ENCODE measurements at regions of chr19 and their contacts with region 1.

Region 1: DNA sequence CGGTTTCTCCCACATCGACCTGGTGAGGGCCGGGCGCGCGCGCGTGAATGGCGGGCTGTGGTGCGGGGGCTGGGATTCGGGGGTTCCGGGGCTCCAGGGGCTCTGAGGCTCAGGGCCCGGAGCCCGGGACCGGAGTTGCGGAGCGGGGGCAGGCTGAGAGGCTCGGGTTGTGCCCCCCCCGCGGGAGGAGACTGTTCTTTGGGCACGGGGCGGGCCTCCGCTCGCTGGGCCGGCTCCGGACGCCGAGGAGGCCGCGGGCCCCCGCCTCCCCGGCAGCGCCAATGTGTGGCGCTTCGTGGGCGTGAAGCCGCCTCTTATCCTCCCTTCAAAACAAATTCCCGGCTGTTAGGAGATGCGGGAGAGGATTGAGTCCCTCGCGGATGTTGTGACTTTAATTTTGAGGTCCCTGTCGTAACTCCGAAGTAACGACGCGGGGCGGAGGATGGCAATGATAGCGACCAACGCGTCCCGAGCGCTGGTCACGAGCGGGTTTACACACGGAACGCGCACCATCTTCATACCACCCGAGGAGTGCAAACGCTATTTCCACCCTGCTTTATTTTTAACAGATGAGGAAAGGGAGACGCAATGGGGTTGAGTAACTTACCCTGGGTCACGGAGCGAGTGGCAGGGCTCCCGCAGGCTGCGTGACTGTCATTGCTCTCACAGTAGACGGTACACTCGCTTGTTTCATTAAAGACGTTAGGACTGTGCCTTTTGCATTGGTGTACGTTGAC is 536 bp downstream of the UBA2 start:
- DNase-seq: peak in 5 of 9 experiments; percentile 24 to 61 (median 35)
- ATAC-seq: peak; percentile 43
- H3K4me3 ChIP-seq: peak overlapping the region; percentile 58 to 84
- H3K4me3 Mint-ChIP-seq: peak overlapping the region; percentile 99
- H3K27ac ChIP-seq: peak overlapping the region; percentile 76 to 82
- H3K27ac Mint-ChIP-seq: peak overlapping the region; percentile 96
- H3K4me1 ChIP-seq: peaks cover 29% of the 10 kb centered on the region
- H3K4me1 Mint-ChIP-seq: peaks cover 41% of the 10 kb centered on the region
- H3K27me3 ChIP-seq: no peaks in the 10 kb centered on the region
- H3K27me3 Mint-ChIP-seq: no peaks in the 10 kb centered on the region
- CTCF ChIP-seq: no peak

Region 2: DNA sequence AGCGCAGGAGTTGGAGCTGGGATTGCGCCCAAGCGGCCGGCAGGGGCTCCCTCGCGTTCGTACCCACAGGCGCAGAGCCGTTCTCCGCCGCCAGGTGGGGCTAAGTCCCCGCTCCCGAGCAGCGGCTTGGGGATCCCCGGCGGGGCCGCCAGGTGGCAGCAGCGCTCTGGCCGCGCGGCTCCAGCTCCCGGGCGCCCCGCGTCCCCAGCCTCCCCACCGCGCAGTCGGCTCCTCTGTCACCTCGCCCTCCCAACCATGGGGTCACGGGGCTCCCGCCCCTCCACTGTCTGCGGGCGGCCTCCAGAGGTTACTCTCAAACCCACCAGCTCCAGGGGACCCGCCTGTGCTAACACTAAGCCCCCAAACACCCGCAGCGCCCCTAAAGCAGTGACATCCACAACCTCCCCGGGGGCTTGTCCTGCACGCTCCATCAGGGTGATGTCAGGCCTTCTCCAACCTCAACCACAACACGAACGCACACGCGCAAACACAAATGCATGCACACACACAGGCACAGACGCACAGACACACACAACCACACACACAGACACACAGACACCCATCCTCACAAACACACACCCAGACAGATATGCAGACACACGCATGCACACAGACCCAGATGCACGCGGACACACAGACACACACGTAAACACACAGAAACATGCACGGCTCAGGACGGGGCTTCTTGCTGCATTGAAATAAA is 650.5 kb before region 1 on chr19:
- CTCF ChIA-PET with region 1: interaction called, 3 read pairs
- POLR2A ChIA-PET with region 1: no interaction called
- intact Hi-C with region 1: loop called in 1 of 2 experiments (anchors 5 kb)
- DNase-seq: peak; percentile 68 to 89 (median 82)
- ATAC-seq: peak; percentile 98
- H3K4me3 ChIP-seq: no peak overlapping the region
- H3K4me3 Mint-ChIP-seq: peak overlapping the region; percentile 2
- H3K27ac ChIP-seq: no peak overlapping the region
- H3K27ac Mint-ChIP-seq: no peak overlapping the region
- H3K4me1 ChIP-seq: peaks cover 11% of the 10 kb centered on the region
- H3K4me1 Mint-ChIP-seq: peaks cover 8% of the 10 kb centered on the region
- H3K27me3 ChIP-seq: peaks cover 0 to 7% of the 10 kb centered on the region in 2 experiments
- H3K27me3 Mint-ChIP-seq: peaks cover 35% of the 10 kb centered on the region
- CTCF ChIP-seq: peak; percentile 100

Region 3: GRCh38 chr19:34288381-34288780 is 140.3 kb before region 1 on chr19:
- CTCF ChIA-PET with region 1: no interaction called
- POLR2A ChIA-PET with region 1: no interaction called
- intact Hi-C with region 1: no loop called
- DNase-seq: no peak
- ATAC-seq: no peak
- H3K4me3 ChIP-seq: no peak overlapping the region
- H3K4me3 Mint-ChIP-seq: no peak overlapping the region
- H3K27ac ChIP-seq: no peak overlapping the region
- H3K27ac Mint-ChIP-seq: no peak overlapping the region
- H3K4me1 ChIP-seq: peaks cover 7% of the 10 kb centered on the region
- H3K4me1 Mint-ChIP-seq: peaks cover 18% of the 10 kb centered on the region
- H3K27me3 ChIP-seq: no peaks in the 10 kb centered on the region
- H3K27me3 Mint-ChIP-seq: no peaks in the 10 kb centered on the region
- CTCF ChIP-seq: no peak

Region 4: GRCh38 chr19:34336781-34337271 is 91.9 kb before region 1 on chr19:
- CTCF ChIA-PET with region 1: interaction called, 4 read pairs
- POLR2A ChIA-PET with region 1: no interaction called
- intact Hi-C with region 1: loop called in 1 of 2 experiments (anchors 2 kb)
- DNase-seq: peak in 7 of 9 experiments; percentile 20 to 76 (median 56)
- ATAC-seq: peak; percentile 70
- H3K4me3 ChIP-seq: no peak overlapping the region
- H3K4me3 Mint-ChIP-seq: no peak overlapping the region
- H3K27ac ChIP-seq: no peak overlapping the region
- H3K27ac Mint-ChIP-seq: peak overlapping the region; percentile 57
- H3K4me1 ChIP-seq: peaks cover 8% of the 10 kb centered on the region
- H3K4me1 Mint-ChIP-seq: peaks cover 7% of the 10 kb centered on the region
- H3K27me3 ChIP-seq: no peaks in the 10 kb centered on the region
- H3K27me3 Mint-ChIP-seq: no peaks in the 10 kb centered on the region
- CTCF ChIP-seq: peak; percentile 92

Region 5: GRCh38 chr19:34359140-34359953 is 69.4 kb before region 1 on chr19:
- CTCF ChIA-PET with region 1: interaction called, 4 read pairs
- POLR2A ChIA-PET with region 1: interaction called, 5 read pairs
- intact Hi-C with region 1: loop called (anchors 1 to 2 kb)
- DNase-seq: peak; percentile 80 to 97 (median 93)
- ATAC-seq: peak; percentile 89
- H3K4me3 ChIP-seq: peak overlapping the region; percentile 46 to 52
- H3K4me3 Mint-ChIP-seq: peak overlapping the region; percentile 90
- H3K27ac ChIP-seq: peak overlapping the region; percentile 59 to 77
- H3K27ac Mint-ChIP-seq: peak overlapping the region; percentile 94
- H3K4me1 ChIP-seq: peaks cover 16% of the 10 kb centered on the region
- H3K4me1 Mint-ChIP-seq: peaks cover 27% of the 10 kb centered on the region
- H3K27me3 ChIP-seq: no peaks in the 10 kb centered on the region
- H3K27me3 Mint-ChIP-seq: no peaks in the 10 kb centered on the region
- CTCF ChIP-seq: peak; percentile 63

Region 6: GRCh38 chr19:34540811-34541557 is 112.3 kb after region 1 on chr19:
- CTCF ChIA-PET with region 1: no interaction called
- POLR2A ChIA-PET with region 1: no interaction called
- intact Hi-C with region 1: no loop called
- DNase-seq: no peak
- ATAC-seq: no peak
- H3K4me3 ChIP-seq: no peak overlapping the region
- H3K4me3 Mint-ChIP-seq: no peak overlapping the region
- H3K27ac ChIP-seq: no peak overlapping the region
- H3K27ac Mint-ChIP-seq: no peak overlapping the region
- H3K4me1 ChIP-seq: no peaks in the 10 kb centered on the region
- H3K4me1 Mint-ChIP-seq: no peaks in the 10 kb centered on the region
- H3K27me3 ChIP-seq: no peaks in the 10 kb centered on the region
- H3K27me3 Mint-ChIP-seq: peaks cover 40% of the 10 kb centered on the region
- CTCF ChIP-seq: no peak

Region 7: DNA sequence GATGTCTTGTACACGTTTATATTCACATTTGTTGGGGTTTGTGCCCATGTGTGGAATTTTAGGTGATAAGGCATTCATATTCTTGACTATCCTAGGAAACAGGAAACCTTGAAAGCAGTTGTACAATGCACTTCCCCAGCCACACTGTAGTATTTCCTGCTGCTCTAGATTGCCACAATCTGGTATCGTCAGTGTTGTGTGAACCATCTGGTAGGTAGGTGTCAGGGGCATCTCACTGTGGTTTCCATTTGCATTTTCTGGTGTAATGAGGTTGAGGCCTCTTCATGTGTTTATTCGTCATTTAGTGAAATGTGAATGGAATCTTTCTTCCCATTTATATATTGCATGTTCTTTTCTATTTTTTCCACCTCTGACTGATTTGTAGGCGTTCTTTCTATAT is 171.6 kb after region 1 on chr19:
- CTCF ChIA-PET with region 1: no interaction called
- POLR2A ChIA-PET with region 1: no interaction called
- intact Hi-C with region 1: no loop called
- DNase-seq: no peak
- ATAC-seq: no peak
- H3K4me3 ChIP-seq: no peak overlapping the region
- H3K4me3 Mint-ChIP-seq: no peak overlapping the region
- H3K27ac ChIP-seq: no peak overlapping the region
- H3K27ac Mint-ChIP-seq: no peak overlapping the region
- H3K4me1 ChIP-seq: no peaks in the 10 kb centered on the region
- H3K4me1 Mint-ChIP-seq: no peaks in the 10 kb centered on the region
- H3K27me3 ChIP-seq: no peaks in the 10 kb centered on the region
- H3K27me3 Mint-ChIP-seq: no peaks in the 10 kb centered on the region
- CTCF ChIP-seq: no peak

Region 8: GRCh38 chr19:34677386-34678084 is 248.8 kb after region 1 on chr19 and contains the start of gene ZNF302:
- CTCF ChIA-PET with region 1: no interaction called
- POLR2A ChIA-PET with region 1: no interaction called
- intact Hi-C with region 1: loop called in 1 of 2 experiments (anchors 2 kb)
- DNase-seq: peak; percentile 86 to 97 (median 94)
- ATAC-seq: peak; percentile 87
- H3K4me3 ChIP-seq: peak within 1 kb of the TSS; percentile 85 to 94
- H3K4me3 Mint-ChIP-seq: peak within 1 kb of the TSS; percentile 99
- H3K27ac ChIP-seq: peak within 1 kb of the TSS; percentile 80 to 86
- H3K27ac Mint-ChIP-seq: peak within 1 kb of the TSS; percentile 100
- H3K4me1 ChIP-seq: peaks cover 23% of the 10 kb centered on the region
- H3K4me1 Mint-ChIP-seq: peaks cover 36% of the 10 kb centered on the region
- H3K27me3 ChIP-seq: no peaks in the 10 kb centered on the region
- H3K27me3 Mint-ChIP-seq: peaks cover 10% of the 10 kb centered on the region
- CTCF ChIP-seq: no peak
- total RNA-seq, gene ZNF302: 8.0 to 10.5 TPM

Region 9: GRCh38 chr19:34712395-34713261 is 283.9 kb after region 1 on chr19:
- CTCF ChIA-PET with region 1: no interaction called
- POLR2A ChIA-PET with region 1: no interaction called
- intact Hi-C with region 1: no loop called
- DNase-seq: peak; percentile 11 to 86 (median 55)
- ATAC-seq: peak; percentile 49
- H3K4me3 ChIP-seq: no peak overlapping the region
- H3K4me3 Mint-ChIP-seq: no peak overlapping the region
- H3K27ac ChIP-seq: no peak overlapping the region
- H3K27ac Mint-ChIP-seq: no peak overlapping the region
- H3K4me1 ChIP-seq: no peaks in the 10 kb centered on the region
- H3K4me1 Mint-ChIP-seq: no peaks in the 10 kb centered on the region
- H3K27me3 ChIP-seq: peaks cover 0 to 4% of the 10 kb centered on the region in 2 experiments
- H3K27me3 Mint-ChIP-seq: peaks cover 35% of the 10 kb centered on the region
- CTCF ChIP-seq: peak; percentile 81